ENCODE measurements at regions of chr3 and their contacts with region 1.

Region 1: DNA sequence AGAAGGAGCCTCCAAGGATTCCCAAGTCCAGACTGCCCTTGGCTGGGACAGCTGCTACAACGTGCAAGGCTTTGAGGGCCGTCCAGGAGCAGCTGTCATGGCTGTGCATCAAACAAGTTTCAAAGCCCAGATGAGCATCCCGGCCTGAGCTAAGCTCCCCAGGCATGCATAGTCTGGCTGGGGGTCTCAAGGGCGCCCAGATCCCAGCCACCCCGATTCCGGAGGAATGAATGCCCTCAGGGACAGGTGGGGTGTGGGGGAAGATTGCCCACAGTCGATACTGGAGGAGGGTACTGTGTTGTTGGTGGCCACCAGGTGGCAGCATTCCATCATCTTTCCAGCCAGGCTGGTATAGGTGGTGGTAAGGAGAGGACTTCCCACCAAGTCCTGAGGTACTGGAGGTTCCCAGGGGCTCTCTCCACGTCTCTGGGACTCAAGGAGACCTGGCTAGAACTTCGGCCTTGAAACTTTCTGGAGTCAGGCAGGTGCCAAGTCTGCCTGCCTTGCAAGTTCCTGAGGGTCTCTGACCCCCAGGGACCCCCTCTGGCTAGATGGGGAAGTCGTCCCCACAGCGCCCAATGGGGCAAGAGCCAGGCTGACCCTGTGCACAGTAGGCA is 32.8 kb downstream of the RBM5 start:
- DNase-seq: peak; percentile 89
- H3K4me3 ChIP-seq: no peak overlapping the region
- H3K27ac ChIP-seq: no peak overlapping the region
- H3K4me1 ChIP-seq: peaks cover 13 to 50% of the 10 kb centered on the region in 2 experiments
- H3K27me3 ChIP-seq: no peaks in the 10 kb centered on the region
- CTCF ChIP-seq: peak; percentile 83
- EP300 ChIP-seq: no peak
- RAD21 ChIP-seq: peak; percentile 97

Region 2: DNA sequence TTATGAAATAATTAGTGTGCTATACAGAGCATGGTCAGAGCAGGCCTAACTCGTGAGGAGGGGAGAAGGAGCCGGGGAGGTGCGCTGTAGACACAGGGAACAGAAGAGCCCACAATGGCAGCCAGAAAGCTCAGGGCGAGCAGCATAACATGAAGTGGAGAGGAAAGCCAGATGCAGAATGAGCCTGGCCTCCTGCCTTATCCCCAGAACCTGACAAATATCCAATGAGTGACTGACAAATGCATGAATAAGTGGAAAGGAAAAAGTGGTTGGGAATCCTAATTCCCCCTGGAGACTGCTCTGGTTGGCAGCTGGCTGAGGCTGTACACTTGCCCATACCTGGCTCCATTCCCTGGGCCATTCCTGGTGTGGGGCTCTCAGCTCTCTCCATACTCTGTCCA is 208.6 kb before region 1 on chr3:
- CTCF ChIA-PET with region 1: no interaction called
- POLR2A ChIA-PET with region 1: no interaction called
- DNase-seq: peak; percentile 66
- H3K4me3 ChIP-seq: no peak overlapping the region
- H3K27ac ChIP-seq: peak overlapping the region in 1 of 2 experiments; percentile 18; a peak in 1 of 4 replicates
- H3K4me1 ChIP-seq: peaks cover 0 to 3% of the 10 kb centered on the region in 2 experiments; a peak in 1 of 4 replicates
- H3K27me3 ChIP-seq: no peaks in the 10 kb centered on the region
- CTCF ChIP-seq: no peak
- EP300 ChIP-seq: no peak
- RAD21 ChIP-seq: no peak

Region 3: DNA sequence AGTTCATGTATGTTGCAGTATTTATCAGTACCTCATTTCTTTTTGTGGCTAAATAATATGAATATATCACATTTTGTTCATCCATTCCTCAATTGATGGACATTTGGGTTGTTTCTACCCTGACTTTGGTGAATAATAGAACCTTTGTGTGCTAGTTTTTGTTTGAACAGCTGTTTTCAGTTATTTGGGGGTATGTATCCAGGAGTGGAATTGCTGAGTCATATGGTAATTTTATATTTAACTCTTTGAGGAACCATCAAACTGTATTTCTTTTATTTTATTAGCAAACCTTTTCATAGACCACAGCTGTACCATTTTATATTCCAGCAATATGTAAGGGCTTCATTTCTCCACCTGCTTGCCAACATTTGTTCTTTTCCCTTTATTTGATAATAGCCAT is 71.2 kb before region 1 on chr3:
- CTCF ChIA-PET with region 1: no interaction called
- POLR2A ChIA-PET with region 1: no interaction called
- DNase-seq: no peak
- H3K4me3 ChIP-seq: no peak overlapping the region
- H3K27ac ChIP-seq: peak overlapping the region; percentile 31 to 92; a peak in 3 of 4 replicates
- H3K4me1 ChIP-seq: peaks cover 0 to 14% of the 10 kb centered on the region in 2 experiments; a peak in 2 of 4 replicates
- H3K27me3 ChIP-seq: no peaks in the 10 kb centered on the region
- CTCF ChIP-seq: no peak
- EP300 ChIP-seq: peak; percentile 34 to 53; a peak in 2 of 4 replicates
- RAD21 ChIP-seq: no peak

Region 4: GRCh38 chr3:50088725-50089608 is 32.6 kb before region 1 on chr3 and contains the start of gene RBM5:
- CTCF ChIA-PET with region 1: interaction called, 12 read pairs
- POLR2A ChIA-PET with region 1: no interaction called
- DNase-seq: peak; percentile 98
- H3K4me3 ChIP-seq: peak within 1 kb of the TSS; percentile 85 to 99
- H3K27ac ChIP-seq: peak within 1 kb of the TSS; percentile 83 to 94
- H3K4me1 ChIP-seq: peaks cover 8 to 9% of the 10 kb centered on the region in 2 experiments; a peak in 2 of 4 replicates
- H3K27me3 ChIP-seq: no peaks in the 10 kb centered on the region
- CTCF ChIP-seq: no peak
- EP300 ChIP-seq: no peak
- RAD21 ChIP-seq: no peak
- polyA plus RNA-seq, gene RBM5: 113 and 168 TPM in 2 replicates

Region 5: GRCh38 chr3:50138266-50139200 is 17.0 kb after region 1 on chr3:
- CTCF ChIA-PET with region 1: interaction called, 22 read pairs
- POLR2A ChIA-PET with region 1: interaction called, 19 read pairs
- DNase-seq: peak; percentile 51
- H3K4me3 ChIP-seq: no peak overlapping the region; a peak in 1 of 4 replicates
- H3K27ac ChIP-seq: no peak overlapping the region
- H3K4me1 ChIP-seq: peaks cover 14 to 43% of the 10 kb centered on the region in 2 experiments; a peak in 3 of 4 replicates
- H3K27me3 ChIP-seq: no peaks in the 10 kb centered on the region
- CTCF ChIP-seq: no peak
- EP300 ChIP-seq: no peak
- RAD21 ChIP-seq: no peak

Region 6: GRCh38 chr3:50154840-50155474 is 33.4 kb after region 1 on chr3 and contains the start of gene SEMA3F:
- CTCF ChIA-PET with region 1: interaction called, 132 read pairs
- POLR2A ChIA-PET with region 1: interaction called, 12 read pairs
- DNase-seq: peak; percentile 96
- H3K4me3 ChIP-seq: peak within 1 kb of the TSS; percentile 64 to 67
- H3K27ac ChIP-seq: no peak within 1 kb of the TSS; a peak in 1 of 4 replicates
- H3K4me1 ChIP-seq: peaks cover 22 to 48% of the 10 kb centered on the region in 2 experiments; a peak in 2 of 4 replicates
- H3K27me3 ChIP-seq: no peaks in the 10 kb centered on the region
- CTCF ChIP-seq: peak; percentile 13; the same call in 1 of the 2 replicates
- EP300 ChIP-seq: no peak
- RAD21 ChIP-seq: peak; percentile 46; the same call in 1 of the 2 replicates
- polyA plus RNA-seq, gene SEMA3F: 23.9 and 30.4 TPM in 2 replicates

Region 7: DNA sequence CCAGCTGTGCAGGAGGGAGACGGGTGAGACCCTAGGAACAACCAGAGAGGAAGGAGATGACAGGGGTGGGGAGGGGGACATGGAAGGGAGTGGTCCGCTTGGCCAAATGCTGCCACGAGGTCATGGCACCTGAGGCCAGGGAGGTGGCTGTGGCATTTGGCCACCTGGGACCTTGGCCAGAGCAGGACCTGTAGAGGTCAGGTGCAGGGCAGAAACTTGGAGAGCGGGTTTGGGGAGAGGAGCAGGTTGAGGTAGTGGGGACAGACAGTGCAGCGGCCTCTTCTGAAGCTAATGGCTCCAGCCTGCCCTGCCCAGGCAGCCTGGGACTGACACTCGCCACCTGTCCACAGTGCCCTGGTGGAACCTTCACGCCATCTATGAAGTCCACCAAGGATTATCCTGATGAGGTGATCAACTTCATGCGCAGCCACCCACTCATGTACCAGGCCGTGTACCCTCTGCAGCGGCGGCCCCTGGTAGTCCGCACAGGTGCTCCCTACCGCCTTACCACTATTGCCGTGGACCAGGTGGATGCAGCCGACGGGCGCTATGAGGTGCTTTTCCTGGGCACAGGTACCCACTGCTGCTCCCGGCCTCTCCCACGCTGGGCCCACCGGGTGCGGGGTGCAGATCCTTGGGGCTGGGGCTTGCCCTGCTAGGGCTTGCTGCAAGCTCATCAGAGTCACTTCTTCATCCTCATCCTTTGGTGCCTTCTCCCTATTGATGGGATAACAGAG is 62.9 kb after region 1 on chr3:
- CTCF ChIA-PET with region 1: interaction called, 684 read pairs
- POLR2A ChIA-PET with region 1: interaction called, 21 read pairs
- DNase-seq: no peak
- H3K4me3 ChIP-seq: no peak overlapping the region
- H3K27ac ChIP-seq: no peak overlapping the region
- H3K4me1 ChIP-seq: peaks cover 0 to 13% of the 10 kb centered on the region in 2 experiments; a peak in 1 of 4 replicates
- H3K27me3 ChIP-seq: no peaks in the 10 kb centered on the region
- CTCF ChIP-seq: no peak
- EP300 ChIP-seq: no peak
- RAD21 ChIP-seq: no peak

Region 8: DNA sequence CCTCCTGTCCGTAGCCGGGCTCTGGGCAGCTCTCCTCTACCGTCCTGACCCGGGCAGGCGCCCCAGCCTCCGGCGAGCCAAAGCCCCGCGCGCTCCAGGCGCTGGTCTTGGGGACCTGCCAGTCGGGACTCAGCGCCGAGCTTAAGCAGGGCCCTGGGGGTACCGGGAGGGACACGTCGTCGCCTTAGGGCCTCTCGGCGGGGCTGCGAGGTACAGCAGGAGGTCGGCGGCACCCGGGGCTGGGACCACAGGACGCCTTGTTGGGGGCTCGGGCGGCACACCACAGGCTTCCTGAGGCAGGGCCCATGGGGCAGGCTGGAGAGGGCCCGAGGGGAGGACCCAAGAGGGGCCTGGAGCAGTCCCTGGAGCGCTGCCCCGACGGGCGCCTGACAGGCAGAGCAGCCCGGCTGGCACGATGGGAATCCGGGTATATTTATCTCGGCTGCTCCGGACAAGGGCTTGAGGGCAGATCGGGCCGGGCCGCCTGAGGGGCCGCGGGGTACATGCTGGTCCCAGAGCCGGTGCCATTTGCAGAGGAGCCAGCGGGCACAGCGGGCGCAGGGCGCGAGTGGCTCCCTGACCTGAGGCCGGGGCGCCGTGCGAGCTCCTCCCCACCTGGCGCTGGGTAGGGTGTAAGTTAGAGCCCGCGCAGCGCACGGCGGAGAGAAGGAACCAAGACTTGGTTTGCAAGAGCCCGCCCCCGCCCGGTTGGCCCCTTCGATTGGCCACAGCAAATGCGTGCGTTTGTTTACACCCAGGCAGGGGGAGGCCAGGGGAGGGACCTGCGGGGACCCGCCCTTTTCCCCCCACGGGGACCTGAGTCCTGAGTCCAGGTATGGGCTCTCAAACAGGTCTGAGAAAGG is 84.1 kb after region 1 on chr3:
- CTCF ChIA-PET with region 1: interaction called, 14 read pairs
- POLR2A ChIA-PET with region 1: interaction called, 3 read pairs
- DNase-seq: peak; percentile 62
- H3K4me3 ChIP-seq: peak overlapping the region; percentile 47 to 48; a peak in 3 of 4 replicates
- H3K27ac ChIP-seq: no peak overlapping the region
- H3K4me1 ChIP-seq: peaks cover 0 to 11% of the 10 kb centered on the region in 2 experiments; a peak in 1 of 4 replicates
- H3K27me3 ChIP-seq: peaks cover 28% of the 10 kb centered on the region
- CTCF ChIP-seq: no peak
- EP300 ChIP-seq: no peak
- RAD21 ChIP-seq: no peak

Region 9: GRCh38 chr3:50227390-50228183 is 106.1 kb after region 1 on chr3:
- CTCF ChIA-PET with region 1: interaction called, 66 read pairs
- POLR2A ChIA-PET with region 1: no interaction called
- DNase-seq: peak; percentile 96
- H3K4me3 ChIP-seq: peak overlapping the region; percentile 73 to 77
- H3K27ac ChIP-seq: peak overlapping the region; percentile 16 to 84; a peak in 3 of 4 replicates
- H3K4me1 ChIP-seq: peaks cover 0 to 9% of the 10 kb centered on the region in 2 experiments; a peak in 1 of 4 replicates
- H3K27me3 ChIP-seq: peaks cover 7% of the 10 kb centered on the region; the same call in 1 of the 2 replicates
- CTCF ChIP-seq: peak; percentile 69
- EP300 ChIP-seq: peak; percentile 19 to 41; a peak in 2 of 4 replicates
- RAD21 ChIP-seq: peak; percentile 86

Region 10: GRCh38 chr3:50370594-50370993 is 249.1 kb after region 1 on chr3:
- CTCF ChIA-PET with region 1: no interaction called
- POLR2A ChIA-PET with region 1: no interaction called
- DNase-seq: peak; percentile 78
- H3K4me3 ChIP-seq: no peak overlapping the region
- H3K27ac ChIP-seq: peak overlapping the region in 1 of 2 experiments; percentile 56; a peak in 2 of 4 replicates
- H3K4me1 ChIP-seq: peaks cover 0 to 78% of the 10 kb centered on the region in 2 experiments; a peak in 2 of 4 replicates
- H3K27me3 ChIP-seq: no peaks in the 10 kb centered on the region
- CTCF ChIP-seq: peak; percentile 31
- EP300 ChIP-seq: no peak
- RAD21 ChIP-seq: peak; percentile 72

Region 11: DNA sequence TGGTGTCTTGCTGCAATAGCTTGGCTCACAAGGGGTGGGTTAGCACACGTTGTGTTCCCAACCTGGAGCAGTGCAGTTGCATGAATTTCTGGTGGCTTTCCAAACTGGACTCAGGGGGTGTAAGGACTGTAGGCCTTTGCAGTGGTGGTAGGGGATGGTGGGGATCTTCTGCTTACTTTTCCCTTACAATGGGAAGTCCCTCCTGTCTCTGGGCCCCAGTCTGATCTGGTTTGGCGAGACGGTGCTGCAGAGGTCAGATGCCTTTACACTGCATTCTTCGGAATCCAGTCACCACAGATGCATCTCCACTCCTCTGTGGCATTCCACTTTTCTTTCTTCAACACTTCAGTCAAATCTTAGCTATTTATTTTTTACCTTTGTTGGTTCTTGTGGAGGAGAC is 685.3 kb after region 1 on chr3:
- CTCF ChIA-PET with region 1: no interaction called
- POLR2A ChIA-PET with region 1: no interaction called
- DNase-seq: no peak
- H3K4me3 ChIP-seq: no peak overlapping the region
- H3K27ac ChIP-seq: no peak overlapping the region
- H3K4me1 ChIP-seq: no peaks in the 10 kb centered on the region
- H3K27me3 ChIP-seq: no peaks in the 10 kb centered on the region
- CTCF ChIP-seq: no peak
- EP300 ChIP-seq: no peak
- RAD21 ChIP-seq: no peak